ENCODE measurements at regions of chr1 and their contacts with region 1.

Region 1: DNA sequence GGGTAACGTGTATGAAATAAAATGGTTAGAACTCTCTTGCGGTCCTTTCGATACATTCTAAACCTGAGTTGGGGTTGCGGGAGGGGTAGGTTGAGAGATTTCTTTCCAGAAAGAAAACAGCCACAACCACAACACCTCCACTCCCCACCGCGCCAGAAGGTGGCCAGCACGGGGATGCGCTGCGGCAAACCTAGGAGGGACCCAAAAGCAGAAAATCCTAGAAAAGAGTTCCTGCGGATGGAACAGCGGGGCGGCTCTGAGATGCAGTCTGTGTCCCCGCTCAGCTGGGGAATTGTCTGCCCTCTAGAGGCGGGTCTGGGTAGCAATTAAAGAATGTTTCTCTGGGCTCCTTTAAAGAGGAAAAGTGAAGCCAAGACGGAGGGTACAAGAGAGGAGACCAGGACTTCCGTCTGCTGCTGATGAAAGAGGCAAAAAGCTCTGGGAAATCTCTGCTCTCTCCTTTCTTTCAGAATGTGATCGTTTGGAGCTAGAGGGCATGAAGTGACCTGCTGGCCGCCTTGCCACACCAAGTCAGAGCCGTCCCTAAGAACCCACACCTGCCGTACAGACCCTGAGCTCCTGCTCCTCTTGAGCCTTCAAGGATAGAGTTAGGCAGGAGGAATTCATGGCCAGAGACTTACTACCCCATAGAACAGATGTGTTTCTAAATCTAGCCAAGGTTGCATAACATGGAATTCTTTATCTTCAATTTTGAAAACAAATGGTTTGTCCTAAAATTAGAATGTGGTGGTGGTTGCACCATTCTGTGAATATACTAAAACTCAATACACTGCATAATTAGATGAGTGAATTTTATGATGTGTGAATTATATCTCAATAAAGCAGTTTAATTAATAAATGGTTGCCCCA is 46.5 kb upstream of the COA6 start:
- DNase-seq: peak; percentile 83
- ATAC-seq: peak; percentile 88
- H3K4me3 Mint-ChIP-seq: peak overlapping the region; percentile 69
- H3K27ac Mint-ChIP-seq: peak overlapping the region; percentile 61
- H3K4me1 Mint-ChIP-seq: peaks cover 22% of the 10 kb centered on the region
- H3K27me3 Mint-ChIP-seq: peaks cover 16% of the 10 kb centered on the region

Region 2: DNA sequence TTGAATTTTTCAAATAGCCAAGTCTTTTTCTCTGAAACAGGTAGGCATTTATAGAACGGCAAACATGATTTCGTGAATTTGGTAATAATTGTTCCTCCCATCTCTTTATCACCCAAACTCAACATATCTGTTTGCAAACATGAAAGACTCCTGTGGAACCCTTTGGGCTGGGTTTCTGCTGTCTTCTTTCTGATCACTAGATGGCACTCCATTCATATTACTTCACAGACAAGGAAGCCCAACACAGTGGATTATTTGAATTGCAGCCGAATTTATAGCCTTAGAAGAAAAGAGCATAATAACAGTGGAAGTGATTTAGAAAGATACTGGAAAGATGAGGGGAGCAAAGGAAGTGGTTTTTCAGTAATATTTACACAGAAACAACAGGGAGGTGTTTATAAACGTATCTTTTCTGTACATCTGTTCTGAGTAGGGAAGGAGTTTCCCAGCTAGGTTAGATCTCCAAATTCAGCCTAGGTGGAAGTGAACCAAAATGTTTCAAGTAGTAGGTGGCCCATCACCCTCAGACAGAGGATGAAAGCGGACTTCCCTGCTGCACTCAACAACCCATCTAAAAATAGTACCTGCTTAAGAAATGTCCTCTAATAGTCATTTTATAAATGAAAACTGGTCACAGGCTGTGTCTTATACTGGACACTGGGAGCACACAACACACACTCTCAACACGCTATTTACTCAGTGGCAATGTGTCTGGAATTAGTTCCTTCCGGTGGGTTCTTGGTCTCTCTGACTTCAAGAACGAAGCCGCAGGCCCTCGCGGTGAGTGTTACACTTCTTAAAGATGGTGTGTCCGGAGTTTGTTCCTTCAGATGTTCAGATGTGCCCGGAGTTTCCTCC is 931.6 kb before region 1 on chr1:
- CTCF ChIA-PET with region 1: no interaction called
- POLR2A ChIA-PET with region 1: no interaction called
- intact Hi-C with region 1: no loop called
- DNase-seq: peak; percentile 27
- ATAC-seq: peak; percentile 75
- H3K4me3 Mint-ChIP-seq: no peak overlapping the region
- H3K27ac Mint-ChIP-seq: no peak overlapping the region
- H3K4me1 Mint-ChIP-seq: no peaks in the 10 kb centered on the region
- H3K27me3 Mint-ChIP-seq: peaks cover 26% of the 10 kb centered on the region

Region 3: DNA sequence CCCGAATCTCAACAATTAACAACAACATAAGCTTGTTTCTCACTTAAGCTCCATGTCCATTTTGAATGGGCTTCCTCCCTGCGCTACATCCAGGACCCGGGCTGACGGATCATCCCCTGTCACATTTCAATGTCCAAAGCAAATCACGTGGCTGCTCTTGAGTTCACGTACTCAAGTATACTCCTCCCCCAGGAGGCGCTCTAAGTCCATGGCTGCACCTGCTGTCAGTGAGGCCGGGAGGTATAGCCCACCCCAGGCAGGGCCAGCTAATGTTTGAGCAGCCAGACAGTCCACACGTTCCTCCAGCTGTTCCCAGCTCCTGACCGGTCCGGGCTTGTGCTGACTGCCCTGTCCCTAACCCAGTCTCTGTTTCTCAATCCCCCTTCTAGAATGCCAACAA is 201.4 kb before region 1 on chr1:
- CTCF ChIA-PET with region 1: interaction called, 7 read pairs
- POLR2A ChIA-PET with region 1: interaction called, 3 read pairs
- intact Hi-C with region 1: loop called (anchors 1 to 5 kb)
- DNase-seq: peak; percentile 73
- ATAC-seq: peak; percentile 73
- H3K4me3 Mint-ChIP-seq: no peak overlapping the region
- H3K27ac Mint-ChIP-seq: no peak overlapping the region
- H3K4me1 Mint-ChIP-seq: no peaks in the 10 kb centered on the region
- H3K27me3 Mint-ChIP-seq: peaks cover 27% of the 10 kb centered on the region

Region 4: DNA sequence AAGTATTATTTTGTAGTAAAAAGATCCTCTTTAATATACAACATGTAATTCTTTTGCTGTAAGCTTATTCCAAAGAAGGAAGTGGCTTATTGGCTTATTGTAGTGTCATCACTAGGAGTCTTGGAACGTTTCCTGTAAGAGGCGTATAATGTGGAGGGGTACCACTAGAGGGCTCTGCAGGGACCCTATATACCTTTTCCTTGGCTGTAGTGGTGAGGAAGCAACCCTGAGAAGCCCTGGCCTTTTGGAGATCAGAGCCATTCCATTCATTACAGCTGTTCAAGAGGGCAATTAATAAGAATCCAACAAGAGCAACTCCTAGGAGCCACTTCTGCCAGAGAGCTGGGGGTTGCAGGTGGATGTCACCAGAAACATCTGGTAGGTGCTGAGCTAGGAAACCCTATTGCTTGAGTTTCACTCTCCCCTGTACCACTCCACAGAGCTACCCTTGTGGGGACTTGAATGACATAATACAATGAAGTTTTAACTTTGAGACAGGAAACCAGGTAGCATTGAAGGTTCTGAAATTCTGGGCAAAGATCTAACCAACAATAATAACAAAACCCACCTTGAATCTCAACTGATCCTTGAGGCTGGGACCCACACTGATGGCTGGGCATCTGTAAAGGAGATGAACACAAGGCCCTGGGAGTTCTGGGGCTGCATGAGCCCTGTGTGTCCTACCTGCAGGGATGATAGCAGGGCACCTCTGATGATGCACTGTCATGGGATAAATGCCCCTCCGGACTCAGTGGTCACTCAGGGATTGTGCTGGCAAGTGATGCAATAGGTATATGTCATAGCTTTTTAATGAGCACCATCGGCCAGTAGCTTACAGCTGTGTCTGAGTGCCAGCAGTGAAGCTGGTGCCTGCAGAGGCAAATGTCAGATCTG is 113.7 kb before region 1 on chr1:
- CTCF ChIA-PET with region 1: interaction called, 27 read pairs
- POLR2A ChIA-PET with region 1: no interaction called
- intact Hi-C with region 1: loop called (anchors 1 kb)
- DNase-seq: peak; percentile 47
- ATAC-seq: peak; percentile 65
- H3K4me3 Mint-ChIP-seq: no peak overlapping the region
- H3K27ac Mint-ChIP-seq: no peak overlapping the region
- H3K4me1 Mint-ChIP-seq: peaks cover 21% of the 10 kb centered on the region
- H3K27me3 Mint-ChIP-seq: peaks cover 31% of the 10 kb centered on the region

Region 5: DNA sequence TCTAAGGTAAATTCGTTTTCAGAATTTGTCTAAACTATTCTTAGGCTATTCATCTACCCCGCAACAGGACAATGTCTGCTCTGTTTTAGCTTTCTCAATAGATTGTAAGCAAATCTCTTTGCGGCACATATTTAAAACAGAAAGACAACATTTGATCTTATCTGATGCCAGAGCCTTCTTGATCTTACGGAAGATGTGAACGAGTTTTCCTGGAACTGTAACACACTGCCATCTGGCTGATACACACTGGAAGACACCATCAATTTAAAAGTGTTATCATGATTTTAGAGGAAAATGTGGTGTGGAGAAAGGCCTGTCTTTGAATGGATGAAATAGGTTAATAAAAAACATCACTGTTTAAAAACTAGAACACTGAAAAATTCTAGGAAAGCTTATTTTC is 82.6 kb after region 1 on chr1:
- CTCF ChIA-PET with region 1: interaction called, 6 read pairs
- POLR2A ChIA-PET with region 1: no interaction called
- intact Hi-C with region 1: loop called in 1 of 2 experiments (anchors 1 kb)
- DNase-seq: peak; percentile 21
- ATAC-seq: peak; percentile 53
- H3K4me3 Mint-ChIP-seq: peak overlapping the region; percentile 51
- H3K27ac Mint-ChIP-seq: peak overlapping the region; percentile 89
- H3K4me1 Mint-ChIP-seq: peaks cover 42% of the 10 kb centered on the region
- H3K27me3 Mint-ChIP-seq: no peaks in the 10 kb centered on the region

Region 6: DNA sequence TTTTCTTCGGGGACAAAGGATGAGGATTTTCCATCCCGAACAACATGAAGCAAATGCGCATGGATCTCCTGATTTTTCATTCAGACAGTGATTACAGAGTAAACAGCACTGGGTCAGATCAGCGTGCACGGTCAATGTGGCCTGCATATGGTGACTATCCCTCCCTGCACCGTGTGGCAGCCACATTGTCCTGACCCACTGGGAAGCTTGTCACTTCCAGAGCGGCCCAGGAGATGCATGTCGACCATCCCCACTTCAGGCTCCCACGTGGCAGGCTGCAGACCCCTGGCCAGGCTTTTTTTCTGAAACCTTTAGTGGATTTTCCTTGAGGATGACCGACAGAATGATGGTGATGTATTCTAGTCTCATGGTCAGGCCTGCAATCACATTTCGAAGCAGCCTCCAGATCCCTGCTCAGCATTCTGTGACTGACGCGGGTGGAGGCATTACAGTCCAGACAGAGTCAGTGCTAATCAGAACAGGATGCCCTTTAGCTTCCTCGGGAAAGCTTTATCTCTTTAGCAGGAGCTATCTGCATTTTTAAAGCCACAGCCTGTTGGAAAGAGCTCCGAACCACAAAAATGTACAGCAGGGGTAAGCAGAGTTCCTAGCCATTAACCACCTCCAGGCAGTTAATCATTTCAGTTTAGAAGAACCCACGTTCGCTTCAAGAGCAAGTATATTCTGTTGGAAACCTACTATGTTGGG is 226.6 kb after region 1 on chr1:
- CTCF ChIA-PET with region 1: no interaction called
- POLR2A ChIA-PET with region 1: no interaction called
- intact Hi-C with region 1: no loop called
- DNase-seq: no peak
- ATAC-seq: no peak
- H3K4me3 Mint-ChIP-seq: no peak overlapping the region
- H3K27ac Mint-ChIP-seq: no peak overlapping the region
- H3K4me1 Mint-ChIP-seq: no peaks in the 10 kb centered on the region
- H3K27me3 Mint-ChIP-seq: no peaks in the 10 kb centered on the region

Region 7: GRCh38 chr1:235075188-235075926 is 748.6 kb after region 1 on chr1:
- CTCF ChIA-PET with region 1: no interaction called
- POLR2A ChIA-PET with region 1: no interaction called
- intact Hi-C with region 1: loop called in 1 of 2 experiments (anchors 10 kb)
- DNase-seq: peak; percentile 86
- ATAC-seq: peak; percentile 64
- H3K4me3 Mint-ChIP-seq: peak overlapping the region; percentile 41
- H3K27ac Mint-ChIP-seq: peak overlapping the region; percentile 98
- H3K4me1 Mint-ChIP-seq: peaks cover 28% of the 10 kb centered on the region
- H3K27me3 Mint-ChIP-seq: no peaks in the 10 kb centered on the region

Region 8: GRCh38 chr1:235527196-235527814 is 1200.6 kb after region 1 on chr1:
- CTCF ChIA-PET with region 1: no interaction called
- POLR2A ChIA-PET with region 1: no interaction called
- intact Hi-C with region 1: no loop called
- DNase-seq: no peak
- ATAC-seq: no peak
- H3K4me3 Mint-ChIP-seq: no peak overlapping the region
- H3K27ac Mint-ChIP-seq: no peak overlapping the region
- H3K4me1 Mint-ChIP-seq: no peaks in the 10 kb centered on the region
- H3K27me3 Mint-ChIP-seq: no peaks in the 10 kb centered on the region